ENCODE measurements at regions of chr16 and their contacts with region 1.

Region 1: DNA sequence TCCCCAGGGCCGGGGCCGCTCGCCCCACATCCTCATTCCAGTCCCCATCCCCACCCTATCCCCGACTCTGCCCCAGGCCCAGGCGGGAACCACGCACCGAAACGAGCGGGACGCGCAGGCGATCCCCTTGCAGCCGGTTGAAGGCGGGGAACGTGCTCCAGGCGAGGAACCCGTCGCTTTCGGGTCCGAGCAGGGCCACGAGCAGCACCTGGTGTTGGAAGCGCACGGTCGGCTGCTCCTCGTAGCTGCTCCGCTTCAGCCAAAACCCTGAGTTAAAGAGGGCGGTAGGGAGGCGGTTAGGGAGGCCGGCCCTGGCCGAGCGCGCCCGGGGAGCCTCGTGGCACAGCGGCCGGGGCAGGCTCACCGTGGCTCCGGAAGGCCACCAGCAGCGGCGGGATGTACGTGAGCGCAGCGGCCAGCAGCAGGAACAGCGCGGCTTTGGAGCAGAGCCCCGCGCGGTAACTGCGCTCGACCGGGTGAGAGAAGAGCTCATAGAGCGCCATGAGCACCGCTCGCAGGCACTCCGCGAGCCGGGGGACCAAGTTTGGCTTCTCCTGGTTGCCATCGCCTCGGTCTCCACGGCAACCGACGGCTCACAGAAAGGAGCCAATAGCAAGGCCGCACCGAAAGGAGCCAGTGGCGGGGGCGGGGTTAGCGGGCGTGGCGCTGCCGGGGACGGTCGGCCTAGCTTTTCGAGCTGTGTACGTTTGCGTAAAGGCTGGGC is at the start of gene TMEM231:
- DNase-seq: peak; percentile 97 to 99 (median 98)

Region 2: DNA sequence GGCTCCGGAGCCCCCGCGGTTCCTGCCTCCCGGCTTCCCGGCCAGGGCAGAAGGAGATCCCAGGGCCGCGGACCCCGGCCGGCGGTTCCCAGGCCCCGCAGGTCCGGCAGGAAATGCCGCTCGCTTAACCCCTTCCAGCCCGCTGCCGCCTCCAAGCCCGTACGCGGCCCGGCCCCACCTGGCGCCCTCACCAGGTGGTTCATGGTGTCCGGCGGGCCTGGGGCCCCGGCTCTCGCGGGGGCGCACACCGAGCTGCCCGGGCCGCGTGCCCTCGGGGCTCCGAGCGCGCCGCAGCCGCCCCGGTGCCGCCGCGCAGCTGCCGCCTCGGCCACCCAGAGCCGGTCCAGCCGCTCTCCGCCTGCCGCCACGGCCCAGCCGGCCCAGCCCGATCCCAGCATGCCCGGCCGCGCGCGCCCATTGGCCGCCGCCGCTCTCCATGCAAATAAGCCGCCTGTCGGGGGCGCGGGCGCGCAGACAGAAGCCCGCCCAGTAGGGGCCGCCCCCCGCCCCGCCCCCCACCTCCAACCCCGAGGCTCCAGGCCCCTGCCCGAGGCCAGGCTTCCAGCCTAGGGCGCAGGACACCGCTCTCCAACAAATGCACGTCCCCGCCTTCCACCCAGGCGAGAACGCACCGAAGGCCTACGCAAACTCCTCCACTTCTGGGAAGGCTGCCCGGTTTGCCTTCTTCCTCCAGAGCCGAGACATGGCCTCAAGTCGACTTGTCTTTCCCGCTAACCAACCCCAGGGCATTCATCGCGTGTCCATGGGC is 304.4 kb before region 1 on chr16 and contains the start of gene BCAR1:
- intact Hi-C with region 1: no loop called
- DNase-seq: peak; percentile 69 to 94 (median 89)

Region 3: DNA sequence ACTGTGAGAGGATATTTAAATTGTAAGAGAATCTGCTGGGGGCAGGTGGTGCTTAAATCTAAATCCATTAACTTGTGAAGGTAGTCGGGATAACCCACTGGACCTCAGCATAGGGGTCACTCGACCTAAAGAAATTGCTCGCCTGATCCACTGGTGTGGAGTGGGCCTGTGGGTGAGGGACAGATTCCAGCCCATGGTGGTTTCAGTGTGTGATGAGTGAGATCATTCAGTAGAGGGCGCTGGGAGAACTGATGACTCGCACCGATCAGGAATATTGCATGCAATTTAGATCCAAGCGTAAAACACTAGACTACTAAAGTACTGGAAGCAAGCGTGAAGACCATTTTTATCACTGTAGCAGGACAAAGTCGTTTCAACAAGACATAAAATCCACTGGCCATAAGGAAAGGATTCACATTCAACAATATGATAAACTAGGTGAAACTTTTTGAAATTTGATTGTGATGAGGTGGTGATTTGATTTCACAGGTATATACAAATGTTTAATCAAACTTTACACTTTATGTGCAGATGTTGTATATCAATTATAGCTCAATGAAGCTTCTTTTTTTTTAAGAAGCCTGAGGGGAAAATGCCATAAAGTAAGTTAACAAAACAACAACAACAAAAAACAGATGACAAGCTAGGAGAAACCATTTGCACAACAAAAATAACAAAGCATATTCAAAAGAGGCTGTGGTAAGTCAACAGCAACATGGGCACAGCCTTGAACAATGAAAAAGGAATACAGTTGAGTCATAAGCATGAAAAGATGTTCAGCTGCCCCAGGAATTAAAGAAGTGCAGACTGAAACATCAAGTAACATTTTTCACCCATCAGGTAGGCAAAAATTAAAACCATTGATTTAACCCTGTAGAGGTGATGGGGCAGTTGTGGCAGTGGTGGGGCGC is 83.9 kb before region 1 on chr16:
- intact Hi-C with region 1: loop called (anchors 10 kb)
- DNase-seq: peak; percentile 39 to 90 (median 72)

Region 4: DNA sequence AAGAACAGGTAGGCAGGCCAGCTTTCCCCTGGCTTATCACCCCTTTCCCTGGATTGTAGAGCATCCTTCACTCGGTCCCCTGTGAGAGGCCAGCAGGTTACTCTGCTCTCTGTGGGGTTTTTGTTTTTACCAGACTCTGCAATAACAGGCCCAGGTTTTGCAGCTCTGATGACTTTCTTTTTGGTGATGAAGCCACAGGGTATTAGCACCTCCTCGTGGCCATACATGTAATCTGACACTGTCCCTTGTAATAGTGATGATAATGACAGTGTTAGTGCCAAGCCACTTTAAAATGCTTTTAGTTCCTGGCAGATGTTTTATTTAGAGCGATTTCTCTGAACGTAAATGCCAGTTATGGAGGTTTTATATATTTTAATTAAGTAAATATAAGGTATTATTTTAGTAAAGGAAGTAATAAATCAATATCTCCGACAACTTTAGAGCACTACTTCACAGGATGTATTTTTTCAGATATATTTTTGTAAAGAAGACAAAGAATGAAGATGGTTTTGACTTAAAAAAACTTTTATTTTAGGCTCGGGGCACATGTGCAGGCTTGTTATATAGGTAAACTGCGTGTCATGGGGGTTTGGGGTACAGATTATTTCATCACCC is 208.4 kb after region 1 on chr16:
- intact Hi-C with region 1: loop called (anchors 5 kb)
- DNase-seq: peak in 40 of 42 donors; percentile 16 to 87 (median 65)